Dorsolateral prefrontal cortex (tissue), 120 donors: ENCODE measurements at regions of chr16 and their contacts with region 1.

Region 1: DNA sequence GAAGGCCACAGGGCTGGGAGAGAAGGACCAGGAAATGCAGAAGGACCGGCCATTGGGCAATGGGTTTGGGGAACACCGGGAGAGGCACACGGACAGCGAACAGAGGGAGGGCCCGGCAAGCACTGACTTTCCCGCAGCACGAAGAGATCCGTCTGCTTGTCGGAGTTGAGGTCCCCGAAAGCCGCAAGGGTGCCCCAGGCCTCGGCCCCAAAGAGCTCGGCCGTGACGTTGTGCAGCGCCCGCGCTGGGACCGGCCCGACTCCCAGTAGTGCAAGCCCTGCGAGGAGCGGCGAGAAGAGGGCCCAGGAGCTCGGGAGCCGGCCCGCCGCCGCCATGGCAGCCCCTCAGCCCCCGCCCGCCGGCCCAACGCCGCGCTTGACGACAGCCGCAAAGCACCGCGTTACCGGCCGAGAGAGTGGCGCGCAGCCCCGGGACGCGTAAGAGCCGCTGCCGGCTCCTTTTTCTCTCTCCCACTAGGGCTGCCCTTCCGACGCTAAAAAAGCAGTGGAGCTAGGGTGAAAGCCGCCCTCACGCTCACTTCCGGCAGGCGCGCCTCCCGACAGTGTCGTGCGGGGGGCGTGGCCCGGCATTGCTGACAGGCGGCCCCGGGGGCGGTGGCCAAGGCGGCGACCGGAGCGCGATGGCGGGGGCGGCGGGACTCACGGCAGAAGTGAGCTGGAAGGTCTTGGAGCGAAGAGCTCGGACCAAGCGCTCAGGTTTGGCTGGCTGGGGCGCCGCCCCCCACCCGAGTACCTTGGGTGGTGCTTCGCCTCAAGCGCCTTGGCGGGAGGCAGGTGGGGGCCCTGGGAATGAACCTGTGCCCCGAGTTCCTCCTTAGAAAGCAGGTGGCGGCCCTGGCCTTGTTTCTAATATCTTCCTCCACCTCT is at the starts of genes ITFG1 and PHKB:
- DNase-seq: peak; percentile 85 to 94 (median 90)
- H3K4me3 ChIP-seq: peak within 1 kb of the TSS; percentile 71 to 100 (median 92)
- H3K27ac ChIP-seq: peak within 1 kb of the TSS; percentile 93 to 100 (median 99)
- H3K27me3 ChIP-seq: no peaks in the 10 kb centered on the region
- CTCF ChIP-seq: peak in 38 of 56 donors; percentile 2 to 63 (median 32)
- total RNA-seq, gene ITFG1: 40.7 to 175 (median 105) TPM
- total RNA-seq, gene PHKB: 69.5 to 136 (median 95.1) TPM

Region 2: DNA sequence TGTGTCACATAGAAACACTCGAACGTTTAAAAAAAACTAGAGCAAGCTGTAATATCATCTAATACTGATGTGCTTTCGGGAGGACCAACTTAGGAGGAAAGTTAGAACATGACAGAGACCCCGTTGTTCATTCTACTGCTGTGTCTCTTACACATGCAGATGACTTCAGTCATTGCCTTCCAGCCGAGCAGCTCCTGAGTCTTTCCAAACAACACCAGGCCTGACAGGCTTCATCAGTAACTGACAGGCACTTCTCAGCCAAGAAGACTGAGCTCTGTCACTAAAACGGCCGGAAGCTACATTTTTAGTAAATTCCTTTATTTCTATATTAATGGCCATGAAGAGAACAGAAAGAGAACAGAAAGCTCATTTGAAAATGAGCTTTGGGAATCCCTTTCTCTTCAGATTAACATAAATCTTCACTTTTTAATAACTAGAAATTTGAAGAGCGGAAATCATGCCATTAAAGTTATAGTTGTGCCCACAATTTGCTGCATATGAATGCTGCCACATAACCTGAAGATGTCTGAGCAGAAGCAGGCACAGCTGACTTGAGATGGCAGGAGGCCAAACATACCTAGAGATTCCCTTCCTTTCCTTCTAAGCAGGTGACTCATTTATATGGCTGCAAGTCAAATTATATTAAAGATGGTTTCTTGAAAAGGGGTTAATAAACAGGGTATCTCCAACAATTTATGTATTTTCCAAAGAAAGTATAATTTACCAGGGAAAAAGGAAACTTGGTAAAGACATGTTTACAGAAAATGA is 149.0 kb before region 1 on chr16:
- intact Hi-C with region 1: loop called in 1 of 2 experiments (anchors 5 kb)
- DNase-seq: peak in 5 of 10 donors; percentile 5 to 56 (median 43)
- H3K4me3 ChIP-seq: peak overlapping the region in 13 of 59 donors; percentile 3 to 35 (median 16)
- H3K27ac ChIP-seq: peak overlapping the region in 51 of 59 donors; percentile 2 to 87 (median 68)
- H3K27me3 ChIP-seq: no peaks in the 10 kb centered on the region
- CTCF ChIP-seq: no peak

Region 3: DNA sequence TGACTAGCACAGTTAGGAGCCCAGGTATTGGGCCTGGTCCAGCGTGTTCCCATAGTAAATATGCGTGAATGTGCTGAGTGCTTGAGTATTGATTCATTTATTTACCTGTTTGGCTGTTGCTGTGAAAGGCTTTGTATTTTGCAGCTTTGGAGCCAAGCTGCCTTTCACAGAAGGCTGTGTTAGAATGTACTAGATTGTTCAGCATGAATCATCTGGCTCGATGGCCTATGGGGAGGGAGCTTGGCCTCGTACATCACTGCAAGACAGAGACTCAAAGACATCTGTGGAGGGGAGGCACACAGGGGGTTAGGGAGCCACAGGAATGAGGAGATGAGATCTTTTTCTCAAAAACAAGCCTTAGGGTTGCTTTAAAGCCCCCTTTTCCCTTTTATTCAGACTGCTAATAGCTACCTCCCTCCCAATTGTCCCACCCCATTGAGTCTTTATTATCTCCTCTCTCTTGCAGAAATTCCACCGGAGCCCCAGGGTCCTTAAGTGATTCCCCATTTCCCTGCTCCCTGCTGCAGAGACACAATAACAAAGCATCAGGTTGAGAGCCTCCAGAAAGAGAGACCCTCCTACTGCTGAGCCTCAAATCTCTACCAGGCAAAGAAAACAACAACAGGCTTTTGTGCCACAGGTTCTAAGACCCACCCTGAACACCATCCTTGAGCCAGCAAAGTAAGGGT is 387.6 kb after region 1 on chr16:
- intact Hi-C with region 1: loop called in 1 of 2 experiments (anchors 5 kb)
- DNase-seq: peak in 6 of 10 donors; percentile 39 to 70 (median 49)
- H3K4me3 ChIP-seq: no peak overlapping the region
- H3K27ac ChIP-seq: peak overlapping the region in 57 of 59 donors; percentile 28 to 93 (median 80)
- H3K27me3 ChIP-seq: no peaks in the 10 kb centered on the region
- CTCF ChIP-seq: no peak

Region 4: DNA sequence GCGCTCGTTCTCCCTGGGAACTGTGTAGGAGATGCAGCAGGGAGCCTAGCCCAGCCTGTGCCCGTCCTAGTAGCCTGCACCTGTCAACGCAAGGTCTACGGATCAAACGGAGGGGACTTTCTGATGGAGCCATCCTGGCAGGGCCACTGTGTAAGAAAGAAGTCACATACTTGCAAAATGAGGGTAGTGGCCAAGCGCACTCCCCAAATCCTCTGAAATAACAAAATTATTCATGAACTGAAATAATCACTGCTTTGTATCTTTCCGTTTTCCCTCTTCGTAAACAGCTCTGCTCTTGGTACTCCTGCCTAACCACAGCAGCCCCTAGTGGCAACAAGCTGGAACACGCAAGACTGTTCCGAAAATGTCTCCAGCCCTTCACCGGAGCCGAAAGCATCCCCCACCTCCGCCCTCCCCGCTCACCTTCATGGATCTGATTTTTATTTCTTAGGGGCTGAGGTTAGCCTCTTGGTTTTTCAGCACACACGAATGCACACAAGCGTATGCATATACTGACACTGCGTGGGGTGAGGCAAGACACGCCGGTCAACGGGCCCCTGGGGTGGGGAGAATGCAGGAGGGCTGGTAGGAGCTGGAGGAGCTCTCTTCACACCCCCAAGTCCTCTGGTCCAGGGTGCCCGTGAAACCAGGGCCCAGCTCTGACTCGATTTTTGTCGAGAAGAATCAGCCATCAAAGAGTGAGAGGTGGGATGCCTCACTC is 594.1 kb after region 1 on chr16:
- intact Hi-C with region 1: loop called in 1 of 2 experiments (anchors 2 kb)
- DNase-seq: peak; percentile 44 to 82 (median 73)
- H3K4me3 ChIP-seq: peak overlapping the region; percentile 12 to 72 (median 51)
- H3K27ac ChIP-seq: peak overlapping the region; percentile 41 to 96 (median 88)
- H3K27me3 ChIP-seq: no peaks in the 10 kb centered on the region
- CTCF ChIP-seq: peak; percentile 67 to 92 (median 86)

Region 5: DNA sequence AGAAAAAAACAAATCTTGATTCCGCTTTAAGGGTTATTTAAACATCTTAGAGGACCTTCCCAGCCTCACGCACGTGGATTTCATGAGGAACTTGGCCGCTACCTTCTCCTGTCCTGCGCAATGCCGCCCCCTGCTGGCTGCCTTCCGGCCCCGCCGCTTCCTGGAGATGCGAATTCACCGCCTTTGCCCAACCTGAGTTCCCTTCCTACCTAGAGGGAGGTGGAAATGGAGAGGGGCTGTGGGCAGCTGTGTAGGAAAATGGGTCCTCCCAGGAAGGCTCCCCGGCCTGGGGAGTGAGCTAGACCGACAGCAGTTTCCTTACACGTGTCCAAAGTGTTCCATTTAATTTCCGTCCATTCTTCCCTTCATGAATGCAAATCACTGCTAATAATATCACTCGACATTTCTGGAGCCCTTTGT is 695.8 kb after region 1 on chr16:
- intact Hi-C with region 1: loop called in 1 of 2 experiments (anchors 10 kb)
- DNase-seq: peak; percentile 75 to 93 (median 84)
- H3K4me3 ChIP-seq: peak overlapping the region in 46 of 59 donors; percentile 3 to 55 (median 41)
- H3K27ac ChIP-seq: no peak overlapping the region
- H3K27me3 ChIP-seq: no peaks in the 10 kb centered on the region
- CTCF ChIP-seq: peak; percentile 80 to 99 (median 97)